ENCODE measurements at regions of chr4 and their contacts with region 1.

Region 1: DNA sequence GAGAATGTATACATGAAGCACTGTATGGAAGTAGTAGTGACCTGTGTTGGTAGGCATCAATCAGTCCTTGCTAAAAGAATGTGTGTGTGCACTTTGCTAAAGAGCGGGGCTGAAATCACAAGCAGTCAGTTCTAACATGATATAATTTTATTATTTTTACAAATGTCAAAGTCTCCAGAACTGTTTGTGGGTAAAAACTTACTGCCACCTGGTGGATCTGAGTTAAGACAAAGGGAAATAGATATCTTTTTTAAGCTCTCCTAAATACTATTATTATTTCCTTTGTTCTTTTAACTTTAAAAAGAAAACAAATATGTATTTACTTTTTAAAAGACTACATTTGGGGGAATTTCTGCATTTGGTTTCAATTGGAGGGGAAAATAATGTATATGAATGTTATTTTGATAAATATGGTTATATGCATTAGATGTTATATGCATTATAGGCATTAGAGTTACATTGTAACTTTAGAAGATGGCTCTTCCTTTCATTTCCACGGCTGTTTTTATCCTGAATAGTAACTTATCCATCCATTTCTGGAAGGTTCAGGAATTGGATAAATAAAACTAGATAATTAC is 7.8 kb upstream of the CLOCK start:
- DNase-seq: no peak
- ATAC-seq: peak in 2 of 4 donors; percentile 36 to 69
- H3K4me3 ChIP-seq: no peak overlapping the region
- H3K27ac ChIP-seq: no peak overlapping the region
- H3K4me1 ChIP-seq: peaks cover 6% of the 10 kb centered on the region
- H3K27me3 ChIP-seq: no peaks in the 10 kb centered on the region
- CTCF ChIP-seq: peak; percentile 44

Region 2: DNA sequence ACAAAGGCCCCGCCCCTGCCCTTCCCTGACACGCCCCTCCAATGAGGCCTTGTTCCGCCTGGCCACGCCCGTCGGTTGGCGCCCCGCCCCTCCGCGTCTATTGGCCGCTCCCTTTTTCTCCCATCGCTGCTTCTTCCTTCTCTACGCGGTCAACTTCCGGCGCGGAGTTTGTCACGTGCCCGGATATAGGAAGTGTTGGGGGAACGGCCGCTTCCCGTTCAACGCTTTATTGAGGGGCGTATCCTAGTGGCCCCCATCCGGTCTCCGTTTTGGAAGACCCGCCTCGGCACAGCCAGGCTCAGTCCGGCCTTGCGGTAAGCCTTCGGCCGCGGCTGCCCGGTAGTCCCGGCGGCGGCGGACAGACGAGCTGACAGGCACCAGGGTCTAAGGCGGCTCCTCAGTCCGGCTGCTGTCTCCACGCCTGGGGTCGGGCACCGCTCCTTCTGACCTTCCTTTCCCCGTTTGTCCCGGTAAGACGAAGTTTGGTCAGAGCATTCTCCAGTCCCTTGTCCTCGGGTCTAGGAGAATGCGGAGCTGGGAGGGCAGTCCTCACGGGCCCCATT is 299.0 kb after region 1 on chr4 and contains the start of gene EXOC1:
- intact Hi-C with region 1: loop called (anchors 5 to 10 kb)
- DNase-seq: peak; percentile 99
- ATAC-seq: peak; percentile 100
- H3K4me3 ChIP-seq: peak within 1 kb of the TSS; percentile 100
- H3K27ac ChIP-seq: peak within 1 kb of the TSS; percentile 94
- H3K4me1 ChIP-seq: peaks cover 20% of the 10 kb centered on the region
- H3K27me3 ChIP-seq: peaks cover 0 to under 1% (median 0%) of the 10 kb centered on the region in 3 donors
- CTCF ChIP-seq: no peak
- total RNA-seq, gene EXOC1: 14.2 to 22.1 (median 18.4) TPM